GM10248 (cell line): ENCODE measurements at regions of chr17 and their contacts with region 1.

Region 1: GRCh38 chr17:57243171-57243948 is 13.0 kb upstream of the MSI2 start:
- DNase-seq: peak; percentile 82
- CTCF ChIP-seq: peak; percentile 100

Region 2: DNA sequence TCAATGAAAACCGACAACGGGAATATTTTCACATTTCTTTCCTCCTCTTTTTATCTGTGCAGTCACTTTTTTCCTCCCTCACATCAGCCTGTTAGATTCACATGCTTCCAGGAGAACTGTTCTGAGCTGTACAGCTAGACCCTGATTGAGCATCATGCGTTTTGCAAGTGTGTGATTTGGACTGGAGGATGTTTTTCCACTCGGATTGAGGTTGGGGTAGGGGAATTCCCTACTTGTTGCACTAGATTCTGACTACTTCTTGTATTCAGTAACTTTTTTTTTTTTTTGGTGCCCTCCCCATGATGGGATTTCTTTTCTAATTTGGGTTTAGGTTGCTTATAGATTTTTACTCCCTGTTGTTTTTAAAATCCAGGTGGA is 17.7 kb after region 1 on chr17:
- CTCF ChIA-PET with region 1: interaction called, 28 read pairs
- POLR2A ChIA-PET with region 1: no interaction called
- DNase-seq: no peak
- CTCF ChIP-seq: no peak

Region 3: GRCh38 chr17:57366558-57367351 is 123.4 kb after region 1 on chr17:
- CTCF ChIA-PET with region 1: interaction called, 20 read pairs
- POLR2A ChIA-PET with region 1: no interaction called
- DNase-seq: no peak
- CTCF ChIP-seq: no peak

Region 4: DNA sequence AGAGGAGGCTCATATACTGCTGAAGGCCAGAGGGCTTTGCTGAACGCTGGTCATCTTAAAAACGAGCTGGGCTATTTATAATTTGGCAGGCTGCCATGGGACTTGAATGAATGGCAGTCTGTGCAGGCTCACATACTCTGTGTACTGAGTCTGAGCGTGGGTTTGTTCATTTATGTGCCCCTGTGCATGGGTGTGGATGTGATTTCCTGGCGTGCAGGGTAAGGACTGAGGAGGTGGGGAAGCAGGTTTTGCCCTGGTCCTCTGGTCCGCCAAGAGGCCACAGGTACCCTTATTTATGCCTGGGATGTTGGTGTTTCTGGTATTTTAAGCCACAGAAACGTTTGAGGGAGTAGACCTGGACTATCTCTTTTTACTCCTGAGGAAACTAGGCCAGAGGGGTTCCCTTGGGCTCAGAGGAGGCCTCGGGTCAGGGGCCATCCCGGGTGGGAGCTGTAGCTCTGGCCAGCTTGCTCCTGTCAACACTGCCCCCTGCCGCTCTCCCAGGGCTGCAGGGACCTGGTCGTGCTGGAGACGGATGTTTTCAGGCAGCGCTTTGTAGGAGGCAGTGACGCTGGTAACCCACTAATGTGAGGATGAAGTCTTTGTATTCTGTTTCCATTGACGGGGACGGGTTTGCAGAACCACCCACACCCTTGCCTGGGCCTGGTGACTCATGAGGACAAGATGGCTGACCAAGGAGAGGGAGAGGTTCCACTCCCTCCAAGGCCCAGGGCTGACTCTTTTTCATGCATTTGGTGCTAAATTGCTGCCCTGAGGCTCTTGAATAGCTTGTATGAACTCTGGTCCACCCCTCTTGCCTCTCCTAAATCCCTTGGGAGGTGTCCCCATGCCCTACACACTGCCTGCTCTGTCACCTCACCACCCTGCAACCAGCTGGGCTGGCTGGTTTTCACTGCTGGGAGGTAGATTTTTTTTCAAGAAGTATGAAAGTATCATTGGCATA is 197.4 kb after region 1 on chr17:
- CTCF ChIA-PET with region 1: interaction called, 39 read pairs
- POLR2A ChIA-PET with region 1: no interaction called
- DNase-seq: peak; percentile 77
- CTCF ChIP-seq: peak; percentile 47

Region 5: GRCh38 chr17:57636985-57637665 is 393.8 kb after region 1 on chr17:
- CTCF ChIA-PET with region 1: interaction called, 11 read pairs
- POLR2A ChIA-PET with region 1: no interaction called
- DNase-seq: no peak
- CTCF ChIP-seq: no peak

Region 6: GRCh38 chr17:57783106-57783742 is 539.9 kb after region 1 on chr17:
- CTCF ChIA-PET with region 1: interaction called, 22 read pairs
- POLR2A ChIA-PET with region 1: no interaction called
- DNase-seq: peak; percentile 86
- CTCF ChIP-seq: peak; percentile 79